Tibial artery (tissue), 4 donors: ENCODE measurements at regions of chr3 and their contacts with region 1.

Region 1: GRCh38 chr3:40333852-40334251 is 24.3 kb downstream of the EIF1B start:
- DNase-seq: no peak
- H3K4me3 ChIP-seq: no peak overlapping the region
- H3K27ac ChIP-seq: no peak overlapping the region
- H3K4me1 ChIP-seq: no peaks in the 10 kb centered on the region
- H3K27me3 ChIP-seq: no peaks in the 10 kb centered on the region
- CTCF ChIP-seq: no peak

Region 2: GRCh38 chr3:40278791-40279190 is 55.1 kb before region 1 on chr3:
- intact Hi-C with region 1: no loop called
- DNase-seq: no peak
- H3K4me3 ChIP-seq: no peak overlapping the region
- H3K27ac ChIP-seq: no peak overlapping the region
- H3K4me1 ChIP-seq: no peaks in the 10 kb centered on the region
- H3K27me3 ChIP-seq: no peaks in the 10 kb centered on the region
- CTCF ChIP-seq: no peak

Region 3: DNA sequence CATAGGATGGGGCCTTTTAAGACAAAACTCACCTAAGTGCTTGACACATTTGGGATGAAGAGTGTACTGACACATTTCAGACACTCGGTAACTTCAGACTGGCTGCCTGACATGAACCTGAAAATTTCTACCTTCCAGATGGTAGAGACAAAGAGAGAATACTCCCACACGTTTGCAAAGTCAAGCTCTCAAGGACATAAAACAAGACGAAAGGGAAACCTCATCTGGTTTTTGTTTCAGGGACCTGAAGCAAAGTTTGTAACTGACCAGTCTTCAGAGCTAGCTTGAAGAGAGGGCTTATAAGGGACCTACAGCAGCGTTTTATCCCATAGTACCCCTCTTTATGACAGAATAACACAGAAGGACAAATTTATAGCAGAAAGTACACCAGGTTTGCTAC is 232.8 kb after region 1 on chr3:
- intact Hi-C with region 1: no loop called
- DNase-seq: no peak
- H3K4me3 ChIP-seq: no peak overlapping the region
- H3K27ac ChIP-seq: no peak overlapping the region
- H3K4me1 ChIP-seq: no peaks in the 10 kb centered on the region
- H3K27me3 ChIP-seq: no peaks in the 10 kb centered on the region
- CTCF ChIP-seq: no peak

Region 4: GRCh38 chr3:41881233-41881821 is 1547.5 kb after region 1 on chr3:
- intact Hi-C with region 1: loop called (anchors 2 kb)
- DNase-seq: no peak
- H3K4me3 ChIP-seq: no peak overlapping the region
- H3K27ac ChIP-seq: no peak overlapping the region
- H3K4me1 ChIP-seq: no peaks in the 10 kb centered on the region
- H3K27me3 ChIP-seq: no peaks in the 10 kb centered on the region
- CTCF ChIP-seq: peak; percentile 56 to 77